CD8-positive, alpha-beta T cell (primary cell): ENCODE measurements at regions of chr17 and their contacts with region 1.

Region 1: GRCh38 chr17:57243171-57243948 is 13.0 kb upstream of the MSI2 start:
- DNase-seq: peak; percentile 60 to 86 (median 77)
- ATAC-seq: peak; percentile 97
- H3K4me3 ChIP-seq: no peak overlapping the region
- H3K4me3 Mint-ChIP-seq: no peak overlapping the region
- H3K27ac ChIP-seq: no peak overlapping the region
- H3K27ac Mint-ChIP-seq: no peak overlapping the region
- H3K4me1 ChIP-seq: no peaks in the 10 kb centered on the region
- H3K4me1 Mint-ChIP-seq: peaks cover 2% of the 10 kb centered on the region
- H3K27me3 ChIP-seq: no peaks in the 10 kb centered on the region
- H3K27me3 Mint-ChIP-seq: no peaks in the 10 kb centered on the region
- CTCF ChIP-seq: peak; percentile 99

Region 2: GRCh38 chr17:57255776-57256681 is 12.7 kb after region 1 on chr17 and contains the start of gene MSI2:
- CTCF ChIA-PET with region 1: interaction called, 93 read pairs
- POLR2A ChIA-PET with region 1: interaction called, 5 read pairs
- intact Hi-C with region 1: loop called in 1 of 2 experiments (anchors 1 kb)
- DNase-seq: peak; percentile 87 to 97 (median 92)
- ATAC-seq: peak; percentile 76
- H3K4me3 ChIP-seq: peak within 1 kb of the TSS; percentile 73 to 81
- H3K4me3 Mint-ChIP-seq: peak within 1 kb of the TSS; percentile 92
- H3K27ac ChIP-seq: peak within 1 kb of the TSS; percentile 64 to 84
- H3K27ac Mint-ChIP-seq: peak within 1 kb of the TSS; percentile 93
- H3K4me1 ChIP-seq: peaks cover 37% of the 10 kb centered on the region
- H3K4me1 Mint-ChIP-seq: peaks cover 49% of the 10 kb centered on the region
- H3K27me3 ChIP-seq: no peaks in the 10 kb centered on the region
- H3K27me3 Mint-ChIP-seq: no peaks in the 10 kb centered on the region
- CTCF ChIP-seq: no peak
- total RNA-seq, gene MSI2: 130 to 135 TPM

Region 3: GRCh38 chr17:57341611-57342520 is 98.5 kb after region 1 on chr17:
- CTCF ChIA-PET with region 1: interaction called, 11 read pairs
- POLR2A ChIA-PET with region 1: no interaction called
- intact Hi-C with region 1: no loop called
- DNase-seq: no peak
- ATAC-seq: no peak
- H3K4me3 ChIP-seq: no peak overlapping the region
- H3K4me3 Mint-ChIP-seq: no peak overlapping the region
- H3K27ac ChIP-seq: no peak overlapping the region
- H3K27ac Mint-ChIP-seq: no peak overlapping the region
- H3K4me1 ChIP-seq: peaks cover 3% of the 10 kb centered on the region
- H3K4me1 Mint-ChIP-seq: peaks cover 46% of the 10 kb centered on the region
- H3K27me3 ChIP-seq: no peaks in the 10 kb centered on the region
- H3K27me3 Mint-ChIP-seq: no peaks in the 10 kb centered on the region
- CTCF ChIP-seq: no peak

Region 4: DNA sequence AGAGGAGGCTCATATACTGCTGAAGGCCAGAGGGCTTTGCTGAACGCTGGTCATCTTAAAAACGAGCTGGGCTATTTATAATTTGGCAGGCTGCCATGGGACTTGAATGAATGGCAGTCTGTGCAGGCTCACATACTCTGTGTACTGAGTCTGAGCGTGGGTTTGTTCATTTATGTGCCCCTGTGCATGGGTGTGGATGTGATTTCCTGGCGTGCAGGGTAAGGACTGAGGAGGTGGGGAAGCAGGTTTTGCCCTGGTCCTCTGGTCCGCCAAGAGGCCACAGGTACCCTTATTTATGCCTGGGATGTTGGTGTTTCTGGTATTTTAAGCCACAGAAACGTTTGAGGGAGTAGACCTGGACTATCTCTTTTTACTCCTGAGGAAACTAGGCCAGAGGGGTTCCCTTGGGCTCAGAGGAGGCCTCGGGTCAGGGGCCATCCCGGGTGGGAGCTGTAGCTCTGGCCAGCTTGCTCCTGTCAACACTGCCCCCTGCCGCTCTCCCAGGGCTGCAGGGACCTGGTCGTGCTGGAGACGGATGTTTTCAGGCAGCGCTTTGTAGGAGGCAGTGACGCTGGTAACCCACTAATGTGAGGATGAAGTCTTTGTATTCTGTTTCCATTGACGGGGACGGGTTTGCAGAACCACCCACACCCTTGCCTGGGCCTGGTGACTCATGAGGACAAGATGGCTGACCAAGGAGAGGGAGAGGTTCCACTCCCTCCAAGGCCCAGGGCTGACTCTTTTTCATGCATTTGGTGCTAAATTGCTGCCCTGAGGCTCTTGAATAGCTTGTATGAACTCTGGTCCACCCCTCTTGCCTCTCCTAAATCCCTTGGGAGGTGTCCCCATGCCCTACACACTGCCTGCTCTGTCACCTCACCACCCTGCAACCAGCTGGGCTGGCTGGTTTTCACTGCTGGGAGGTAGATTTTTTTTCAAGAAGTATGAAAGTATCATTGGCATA is 197.4 kb after region 1 on chr17:
- CTCF ChIA-PET with region 1: interaction called, 24 read pairs
- POLR2A ChIA-PET with region 1: no interaction called
- intact Hi-C with region 1: loop called in 1 of 2 experiments (anchors 2 kb)
- DNase-seq: peak; percentile 31 to 89 (median 63)
- ATAC-seq: peak; percentile 82
- H3K4me3 ChIP-seq: peak overlapping the region in 1 of 2 experiments; percentile 14
- H3K4me3 Mint-ChIP-seq: peak overlapping the region; percentile 8
- H3K27ac ChIP-seq: peak overlapping the region in 1 of 2 experiments; percentile 37
- H3K27ac Mint-ChIP-seq: peak overlapping the region; percentile 94
- H3K4me1 ChIP-seq: peaks cover 41% of the 10 kb centered on the region
- H3K4me1 Mint-ChIP-seq: peaks cover 72% of the 10 kb centered on the region
- H3K27me3 ChIP-seq: no peaks in the 10 kb centered on the region
- H3K27me3 Mint-ChIP-seq: no peaks in the 10 kb centered on the region
- CTCF ChIP-seq: peak; percentile 20

Region 5: DNA sequence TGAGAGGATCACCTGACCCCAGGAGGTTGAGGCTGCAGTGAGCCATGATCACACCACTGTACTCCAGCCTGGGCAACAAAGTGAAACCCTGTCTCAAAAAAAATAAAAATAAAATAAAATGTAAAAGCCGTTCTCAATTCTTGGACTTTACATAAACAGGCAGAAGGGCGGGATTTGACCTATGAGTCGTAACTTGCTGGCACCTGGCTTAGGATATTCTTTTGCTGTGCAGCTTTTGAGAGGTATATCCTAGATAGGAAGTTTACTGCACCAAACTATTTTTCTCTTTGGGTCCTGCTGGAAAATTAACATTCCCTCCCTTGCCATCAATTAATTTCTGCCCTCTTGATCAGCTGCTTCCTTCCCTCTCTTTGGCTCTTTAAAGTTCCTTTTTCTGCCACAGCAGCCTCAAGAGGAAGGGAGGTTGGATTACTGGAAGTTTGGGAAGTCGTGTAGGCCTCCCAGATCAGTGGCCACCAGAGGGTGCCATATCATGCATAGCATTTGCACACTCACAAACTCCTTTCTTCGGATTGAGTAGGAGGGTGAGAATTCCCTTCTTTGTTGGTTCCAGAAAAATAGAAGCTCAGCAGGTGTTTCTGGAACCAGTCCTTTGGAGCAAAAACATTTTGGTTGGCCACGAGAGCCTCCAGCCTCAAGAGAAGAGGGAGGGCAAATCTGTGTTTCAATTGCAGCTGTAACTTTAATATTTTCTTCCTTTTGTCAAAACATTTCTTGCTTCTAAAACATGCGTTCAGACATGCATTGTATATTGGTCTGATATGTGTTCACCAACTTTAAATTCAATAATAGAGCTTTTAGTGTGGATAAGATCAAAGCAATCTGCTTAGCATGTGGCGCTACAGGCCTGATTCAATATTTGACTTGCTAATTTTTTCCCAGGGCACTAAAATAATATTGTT is 354.4 kb after region 1 on chr17:
- CTCF ChIA-PET with region 1: interaction called, 14 read pairs
- POLR2A ChIA-PET with region 1: no interaction called
- intact Hi-C with region 1: no loop called
- DNase-seq: peak in 5 of 9 experiments; percentile 33 to 66 (median 57)
- ATAC-seq: no peak
- H3K4me3 ChIP-seq: no peak overlapping the region
- H3K4me3 Mint-ChIP-seq: no peak overlapping the region
- H3K27ac ChIP-seq: peak overlapping the region in 1 of 2 experiments; percentile 32
- H3K27ac Mint-ChIP-seq: peak overlapping the region; percentile 89
- H3K4me1 ChIP-seq: peaks cover 52% of the 10 kb centered on the region
- H3K4me1 Mint-ChIP-seq: peaks cover 58% of the 10 kb centered on the region
- H3K27me3 ChIP-seq: no peaks in the 10 kb centered on the region
- H3K27me3 Mint-ChIP-seq: no peaks in the 10 kb centered on the region
- CTCF ChIP-seq: peak; percentile 64

Region 6: GRCh38 chr17:57783106-57783742 is 539.9 kb after region 1 on chr17:
- CTCF ChIA-PET with region 1: interaction called, 33 read pairs
- POLR2A ChIA-PET with region 1: no interaction called
- intact Hi-C with region 1: loop called (anchors 1 kb)
- DNase-seq: peak; percentile 53 to 85 (median 72)
- ATAC-seq: peak; percentile 91
- H3K4me3 ChIP-seq: peak overlapping the region in 1 of 2 experiments; percentile 25
- H3K4me3 Mint-ChIP-seq: no peak overlapping the region
- H3K27ac ChIP-seq: no peak overlapping the region
- H3K27ac Mint-ChIP-seq: no peak overlapping the region
- H3K4me1 ChIP-seq: peaks cover 8% of the 10 kb centered on the region
- H3K4me1 Mint-ChIP-seq: peaks cover 8% of the 10 kb centered on the region
- H3K27me3 ChIP-seq: peaks cover 3 to 6% of the 10 kb centered on the region in 2 experiments
- H3K27me3 Mint-ChIP-seq: peaks cover 16% of the 10 kb centered on the region
- CTCF ChIP-seq: peak; percentile 88

Region 7: GRCh38 chr17:58615768-58616659 is 1372.7 kb after region 1 on chr17:
- CTCF ChIA-PET with region 1: no interaction called
- POLR2A ChIA-PET with region 1: no interaction called
- intact Hi-C with region 1: no loop called
- DNase-seq: no peak
- ATAC-seq: no peak
- H3K4me3 ChIP-seq: no peak overlapping the region
- H3K4me3 Mint-ChIP-seq: no peak overlapping the region
- H3K27ac ChIP-seq: no peak overlapping the region
- H3K27ac Mint-ChIP-seq: no peak overlapping the region
- H3K4me1 ChIP-seq: no peaks in the 10 kb centered on the region
- H3K4me1 Mint-ChIP-seq: no peaks in the 10 kb centered on the region
- H3K27me3 ChIP-seq: no peaks in the 10 kb centered on the region
- H3K27me3 Mint-ChIP-seq: no peaks in the 10 kb centered on the region
- CTCF ChIP-seq: no peak